ENCODE measurements at regions of chr18 and their contacts with region 1.

Region 1: GRCh38 chr18:136433-136832 is 21.9 kb upstream of the USP14 start:
- DNase-seq: no peak
- ATAC-seq: no peak
- H3K4me3 ChIP-seq: no peak overlapping the region
- H3K27ac ChIP-seq: no peak overlapping the region
- H3K4me1 ChIP-seq: no peaks in the 10 kb centered on the region
- H3K27me3 ChIP-seq: no peaks in the 10 kb centered on the region
- CTCF ChIP-seq: no peak

Region 2: DNA sequence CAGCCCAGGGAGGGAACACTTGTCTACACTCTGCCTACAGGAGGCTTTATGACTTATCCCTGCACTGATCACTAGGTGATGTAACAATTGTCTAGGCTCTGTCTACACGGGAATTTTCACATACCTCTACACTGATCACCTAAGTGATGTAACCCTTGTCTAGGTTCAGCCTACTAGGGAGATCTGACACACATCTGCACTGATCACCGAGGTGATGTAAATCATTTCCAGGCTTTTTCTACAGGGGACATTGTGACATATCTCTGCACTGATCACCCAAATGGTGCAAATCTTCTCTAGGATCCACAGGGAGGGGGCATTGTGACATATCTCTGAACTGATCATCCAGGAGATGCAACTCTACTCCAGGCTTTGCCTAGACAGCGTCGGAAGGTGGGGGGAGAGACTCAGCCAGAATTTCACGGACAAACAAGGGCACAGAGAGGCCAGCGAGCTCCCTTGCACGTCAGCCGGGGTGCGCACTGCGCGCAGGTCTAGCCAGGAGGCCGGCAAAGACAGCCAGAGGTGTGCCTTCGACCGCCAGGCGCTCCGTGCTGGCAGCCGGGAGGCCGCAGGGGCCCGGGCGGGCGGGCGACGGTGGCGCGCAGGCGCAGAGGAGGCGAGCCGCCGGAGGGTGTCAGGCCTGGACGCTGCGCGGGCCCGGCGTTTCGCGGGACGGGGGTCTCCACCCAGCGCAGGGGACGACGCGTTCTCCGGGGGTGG is 25.0 kb before region 1 on chr18:
- CTCF ChIA-PET with region 1: no interaction called
- POLR2A ChIA-PET with region 1: no interaction called
- in situ Hi-C with region 1: no loop called
- intact Hi-C with region 1: no loop called
- DNase-seq: no peak
- ATAC-seq: peak; percentile 63
- H3K4me3 ChIP-seq: peak overlapping the region; percentile 41 to 54
- H3K27ac ChIP-seq: peak overlapping the region; percentile 93
- H3K4me1 ChIP-seq: peaks cover 5% of the 10 kb centered on the region
- H3K27me3 ChIP-seq: no peaks in the 10 kb centered on the region
- CTCF ChIP-seq: no peak

Region 3: GRCh38 chr18:148841-149240 is 12.4 kb after region 1 on chr18:
- CTCF ChIA-PET with region 1: no interaction called
- POLR2A ChIA-PET with region 1: interaction called, 10 read pairs
- in situ Hi-C with region 1: no loop called
- intact Hi-C with region 1: no loop called
- DNase-seq: no peak
- ATAC-seq: no peak
- H3K4me3 ChIP-seq: no peak overlapping the region
- H3K27ac ChIP-seq: no peak overlapping the region
- H3K4me1 ChIP-seq: no peaks in the 10 kb centered on the region
- H3K27me3 ChIP-seq: no peaks in the 10 kb centered on the region
- CTCF ChIP-seq: no peak

Region 4: GRCh38 chr18:191725-192124 is 55.3 kb after region 1 on chr18:
- CTCF ChIA-PET with region 1: no interaction called
- POLR2A ChIA-PET with region 1: no interaction called
- in situ Hi-C with region 1: no loop called
- intact Hi-C with region 1: no loop called
- DNase-seq: no peak
- ATAC-seq: no peak
- H3K4me3 ChIP-seq: no peak overlapping the region
- H3K27ac ChIP-seq: no peak overlapping the region
- H3K4me1 ChIP-seq: no peaks in the 10 kb centered on the region
- H3K27me3 ChIP-seq: no peaks in the 10 kb centered on the region
- CTCF ChIP-seq: no peak

Region 5: DNA sequence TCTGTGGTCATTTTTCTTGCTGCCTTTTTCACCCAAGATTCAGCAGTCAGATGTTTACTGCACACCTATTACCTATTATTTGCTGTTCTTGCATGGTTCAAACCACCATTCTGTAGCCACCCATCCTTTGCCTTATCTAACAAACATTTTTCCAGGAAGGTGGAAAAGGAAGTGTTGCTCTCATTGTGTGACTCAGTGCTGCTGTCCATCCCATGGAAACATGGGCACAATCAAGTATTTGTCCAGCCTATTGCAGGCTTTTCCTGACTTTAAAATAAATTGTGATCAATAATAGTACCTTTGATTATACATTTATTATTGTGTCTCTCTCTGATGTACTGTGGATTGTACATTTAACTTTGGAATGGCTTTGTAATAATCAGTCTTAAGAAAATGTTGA is 75.1 kb after region 1 on chr18:
- CTCF ChIA-PET with region 1: no interaction called
- POLR2A ChIA-PET with region 1: interaction called, 10 read pairs
- in situ Hi-C with region 1: no loop called
- intact Hi-C with region 1: no loop called
- DNase-seq: no peak
- ATAC-seq: no peak
- H3K4me3 ChIP-seq: no peak overlapping the region
- H3K27ac ChIP-seq: no peak overlapping the region
- H3K4me1 ChIP-seq: no peaks in the 10 kb centered on the region
- H3K27me3 ChIP-seq: no peaks in the 10 kb centered on the region
- CTCF ChIP-seq: no peak

Region 6: GRCh38 chr18:449374-449773 is 312.9 kb after region 1 on chr18:
- CTCF ChIA-PET with region 1: no interaction called
- POLR2A ChIA-PET with region 1: no interaction called
- in situ Hi-C with region 1: no loop called
- intact Hi-C with region 1: no loop called
- DNase-seq: no peak
- ATAC-seq: peak; percentile 51; the same call in 1 of the 2 replicates
- H3K4me3 ChIP-seq: no peak overlapping the region
- H3K27ac ChIP-seq: no peak overlapping the region
- H3K4me1 ChIP-seq: no peaks in the 10 kb centered on the region
- H3K27me3 ChIP-seq: peaks cover 2% of the 10 kb centered on the region
- CTCF ChIP-seq: no peak

Measured in Panc1 (cell line).